ENCODE measurements at regions of chr7 and their contacts with region 1.

Region 1: GRCh38 chr7:144174613-144175012 is 8.7 kb upstream of the CTAGE4 start:
- DNase-seq: no peak
- H3K4me3 Mint-ChIP-seq: no peak overlapping the region
- H3K27ac Mint-ChIP-seq: no peak overlapping the region
- H3K4me1 Mint-ChIP-seq: peaks cover 5% of the 10 kb centered on the region
- H3K27me3 Mint-ChIP-seq: peaks cover 2% of the 10 kb centered on the region

Region 2: GRCh38 chr7:144102041-144102440 is 72.6 kb before region 1 on chr7:
- CTCF ChIA-PET with region 1: no interaction called
- intact Hi-C with region 1: no loop called
- DNase-seq: no peak
- H3K4me3 Mint-ChIP-seq: no peak overlapping the region
- H3K27ac Mint-ChIP-seq: no peak overlapping the region
- H3K4me1 Mint-ChIP-seq: peaks cover 17% of the 10 kb centered on the region
- H3K27me3 Mint-ChIP-seq: no peaks in the 10 kb centered on the region

Region 3: DNA sequence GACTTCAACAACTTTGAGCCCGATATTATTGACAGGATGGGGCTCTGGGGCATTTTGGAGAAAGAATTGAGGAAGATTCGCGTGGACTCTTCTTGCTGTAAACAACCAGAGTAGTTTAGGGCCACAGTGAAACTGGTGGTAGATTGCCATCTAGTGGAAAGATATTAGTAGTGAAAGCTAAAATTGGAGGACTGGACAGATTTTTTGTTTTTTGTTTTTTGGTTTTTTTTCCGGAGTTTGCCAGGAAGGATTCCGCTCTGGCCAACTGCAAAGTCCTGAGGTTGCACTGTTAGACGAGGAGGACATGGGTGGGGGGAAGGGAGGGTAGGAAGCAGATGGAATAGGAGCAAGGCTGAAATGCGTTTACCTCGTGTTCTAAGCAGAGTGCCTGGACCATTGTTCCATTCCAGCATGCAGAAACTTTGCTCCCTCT is 217.2 kb after region 1 on chr7:
- CTCF ChIA-PET with region 1: interaction called, 3 read pairs
- intact Hi-C with region 1: loop called (anchors 5 kb)
- DNase-seq: peak; percentile 25
- H3K4me3 Mint-ChIP-seq: peak overlapping the region; percentile 33
- H3K27ac Mint-ChIP-seq: no peak overlapping the region
- H3K4me1 Mint-ChIP-seq: peaks cover 2% of the 10 kb centered on the region
- H3K27me3 Mint-ChIP-seq: no peaks in the 10 kb centered on the region

Region 4: DNA sequence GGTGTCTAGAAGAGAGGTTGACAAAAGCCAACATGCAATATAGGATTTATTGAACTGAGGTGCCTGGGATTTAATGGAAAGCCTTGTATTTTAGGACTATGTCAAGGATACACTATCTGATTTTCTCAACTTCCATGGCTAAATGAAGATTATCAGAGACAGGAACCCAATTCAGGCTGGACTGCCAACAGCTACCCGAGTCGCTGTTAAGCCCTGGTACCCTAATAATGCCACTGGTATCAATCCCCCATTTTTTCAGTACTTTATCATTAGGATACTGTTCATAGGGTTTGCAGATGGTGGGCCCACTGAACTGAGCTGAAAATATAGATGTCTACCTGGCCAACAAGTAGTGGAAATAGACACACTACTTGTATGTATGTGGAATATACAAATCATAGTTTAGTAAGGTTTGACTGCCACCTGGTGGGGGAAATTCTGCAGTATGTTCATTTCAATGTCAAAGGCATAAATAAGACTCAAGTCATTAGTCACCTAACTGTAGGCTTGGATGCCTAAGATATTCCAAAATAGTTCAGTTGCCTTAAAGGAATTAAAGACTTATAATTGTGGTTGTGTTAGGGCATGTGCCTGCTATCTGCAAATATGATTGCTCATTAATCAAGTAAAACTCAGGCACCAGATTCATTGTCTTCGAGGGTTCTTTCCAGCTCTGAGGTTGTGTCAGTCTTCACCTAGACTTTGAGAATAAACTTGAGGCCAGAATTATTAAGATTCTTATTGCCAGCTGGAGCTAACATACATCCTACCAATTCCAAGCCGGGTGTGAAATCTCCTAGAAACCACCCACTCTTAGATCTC is 263.0 kb after region 1 on chr7:
- CTCF ChIA-PET with region 1: interaction called, 3 read pairs
- intact Hi-C with region 1: loop called (anchors 5 kb)
- DNase-seq: peak; percentile 83
- H3K4me3 Mint-ChIP-seq: no peak overlapping the region
- H3K27ac Mint-ChIP-seq: no peak overlapping the region
- H3K4me1 Mint-ChIP-seq: no peaks in the 10 kb centered on the region
- H3K27me3 Mint-ChIP-seq: no peaks in the 10 kb centered on the region